AG04449 (cell line): ENCODE measurements at regions of chr4 and their contacts with region 1.

Region 1: DNA sequence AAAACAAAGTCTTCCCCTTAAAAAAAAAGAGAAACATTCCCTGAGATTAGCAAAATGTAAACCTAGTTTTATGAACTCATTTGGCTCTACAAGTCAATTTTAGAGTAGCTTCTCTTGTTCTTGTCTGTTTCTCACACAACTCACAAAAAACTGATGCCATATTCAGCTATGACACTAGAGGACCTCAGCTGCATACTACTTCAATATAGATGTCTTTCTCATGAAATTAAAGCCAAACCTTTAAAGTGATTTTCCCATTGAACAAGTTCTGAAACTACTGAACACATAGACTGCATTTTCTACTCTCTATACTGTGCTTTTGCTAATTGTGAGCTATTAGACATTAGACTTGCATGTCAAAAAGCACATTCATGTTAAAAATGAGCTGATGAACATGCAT is 49.8 kb downstream of the TBCK start:
- DNase-seq: peak; percentile 17
- H3K4me3 ChIP-seq: no peak overlapping the region
- CTCF ChIP-seq: peak; percentile 51

Region 2: GRCh38 chr4:106773076-106773905 is 507.1 kb after region 1 on chr4:
- CTCF ChIA-PET with region 1: no interaction called
- POLR2A ChIA-PET with region 1: no interaction called
- DNase-seq: no peak
- H3K4me3 ChIP-seq: no peak overlapping the region
- CTCF ChIP-seq: no peak

Region 3: GRCh38 chr4:106809076-106809475 is 542.9 kb after region 1 on chr4:
- CTCF ChIA-PET with region 1: interaction called, 17 read pairs
- POLR2A ChIA-PET with region 1: no interaction called
- DNase-seq: no peak
- H3K4me3 ChIP-seq: no peak overlapping the region
- CTCF ChIP-seq: peak; percentile 43